Transverse colon (tissue), 4 donors: ENCODE measurements at regions of chr6 and their contacts with region 1.

Region 1: GRCh38 chr6:158819213-158819909 is at the start of gene EZR:
- DNase-seq: peak; percentile 90
- H3K4me3 ChIP-seq: peak within 1 kb of the TSS; percentile 80 to 99 (median 94)
- H3K27ac ChIP-seq: peak within 1 kb of the TSS; percentile 96 to 100 (median 99)
- H3K4me1 ChIP-seq: peaks cover 12 to 37% (median 24%) of the 10 kb centered on the region in 4 donors
- H3K27me3 ChIP-seq: no peaks in the 10 kb centered on the region
- CTCF ChIP-seq: peak in 3 of 5 experiments; percentile 9 to 30 (median 10)
- EP300 ChIP-seq: no peak
- POLR2A ChIP-seq: peak; percentile 81
- total RNA-seq, gene EZR: 149 to 430 (median 319) TPM

Region 2: GRCh38 chr6:158869826-158870648 is 50.7 kb after region 1 on chr6:
- in situ Hi-C with region 1: loop called in 1 of 4 experiments (anchors 10 kb)
- intact Hi-C with region 1: loop called (anchors 5 kb)
- DNase-seq: peak; percentile 96
- H3K4me3 ChIP-seq: peak overlapping the region; percentile 18 to 45 (median 31)
- H3K27ac ChIP-seq: peak overlapping the region; percentile 88 to 97 (median 92)
- H3K4me1 ChIP-seq: peaks cover 0 to 24% (median 15%) of the 10 kb centered on the region in 4 donors
- H3K27me3 ChIP-seq: no peaks in the 10 kb centered on the region
- CTCF ChIP-seq: peak in 4 of 5 experiments; percentile 14 to 78 (median 36)
- EP300 ChIP-seq: peak; percentile 66
- POLR2A ChIP-seq: peak; percentile 86